ENCODE measurements at regions of chr14 and their contacts with region 1.

Region 1: DNA sequence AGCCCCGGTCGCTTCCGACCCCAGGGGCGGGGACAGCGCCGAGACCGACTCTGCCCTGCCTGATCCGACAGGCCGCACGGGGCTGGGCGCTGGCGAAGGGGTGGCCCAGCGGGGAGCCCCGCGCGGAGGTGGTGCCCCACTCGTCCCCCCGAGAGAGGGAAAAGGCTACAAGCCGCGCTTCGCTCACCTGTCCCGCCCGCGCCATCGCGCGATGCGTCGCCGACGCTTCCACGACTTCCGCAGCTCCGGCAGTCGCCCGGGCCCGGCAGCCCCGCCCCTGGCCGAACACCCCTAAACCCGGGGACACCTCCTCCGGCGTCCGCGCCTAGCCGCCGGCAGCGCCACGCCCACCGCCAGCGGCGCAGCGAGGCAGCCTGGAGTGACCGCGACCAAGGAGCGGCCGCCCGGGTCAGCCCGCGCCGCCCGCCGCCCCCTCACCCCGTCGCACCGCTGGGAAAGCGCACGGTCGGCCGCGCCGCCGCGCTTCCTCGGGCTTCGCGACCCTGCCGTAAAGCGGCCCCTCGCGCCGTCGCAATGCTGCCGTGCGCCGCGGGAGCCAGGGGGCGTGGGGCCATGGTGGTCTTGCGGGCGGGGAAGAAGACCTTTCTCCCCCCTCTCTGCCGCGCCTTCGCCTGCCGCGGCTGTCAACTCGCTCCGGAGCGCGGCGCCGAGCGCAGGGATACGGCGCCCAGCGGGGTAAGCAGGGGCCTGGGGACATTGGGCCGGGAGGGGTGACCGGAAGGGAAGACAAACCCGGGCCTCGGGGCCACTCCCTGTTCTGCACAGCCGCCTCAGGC is at the starts of genes BAG5 and COA8:
- DNase-seq: peak; percentile 84 to 89
- ATAC-seq: peak; percentile 88 to 89
- H3K4me3 ChIP-seq: peak within 1 kb of the TSS; percentile 99
- H3K27ac ChIP-seq: peak within 1 kb of the TSS; percentile 95 to 98
- H3K4me1 ChIP-seq: peaks cover 37% of the 10 kb centered on the region
- CTCF ChIP-seq: no peak
- EP300 ChIP-seq: no peak
- POLR2A ChIP-seq: peak; percentile 71
- RAD21 ChIP-seq: no peak
- polyA plus RNA-seq, gene BAG5: 20.4 and 20.8 TPM in 2 replicates
- polyA plus RNA-seq, gene COA8: 23.2 and 29.8 TPM in 2 replicates

Region 2: GRCh38 chr14:103520657-103521437 is 41.8 kb before region 1 on chr14:
- CTCF ChIA-PET with region 1: interaction called, 52 read pairs
- POLR2A ChIA-PET with region 1: no interaction called
- DNase-seq: peak; percentile 81
- ATAC-seq: peak; percentile 31 to 52
- H3K4me3 ChIP-seq: peak overlapping the region; percentile 79
- H3K27ac ChIP-seq: peak overlapping the region; percentile 71 to 88
- H3K4me1 ChIP-seq: peaks cover 56% of the 10 kb centered on the region
- CTCF ChIP-seq: peak; percentile 57; the same call in 2 of the 3 replicates
- EP300 ChIP-seq: no peak
- POLR2A ChIP-seq: peak; percentile 19; the same call in 1 of the 2 replicates
- RAD21 ChIP-seq: peak in 1 of 2 experiments; percentile 31; a peak in 2 of 5 replicates

Region 3: DNA sequence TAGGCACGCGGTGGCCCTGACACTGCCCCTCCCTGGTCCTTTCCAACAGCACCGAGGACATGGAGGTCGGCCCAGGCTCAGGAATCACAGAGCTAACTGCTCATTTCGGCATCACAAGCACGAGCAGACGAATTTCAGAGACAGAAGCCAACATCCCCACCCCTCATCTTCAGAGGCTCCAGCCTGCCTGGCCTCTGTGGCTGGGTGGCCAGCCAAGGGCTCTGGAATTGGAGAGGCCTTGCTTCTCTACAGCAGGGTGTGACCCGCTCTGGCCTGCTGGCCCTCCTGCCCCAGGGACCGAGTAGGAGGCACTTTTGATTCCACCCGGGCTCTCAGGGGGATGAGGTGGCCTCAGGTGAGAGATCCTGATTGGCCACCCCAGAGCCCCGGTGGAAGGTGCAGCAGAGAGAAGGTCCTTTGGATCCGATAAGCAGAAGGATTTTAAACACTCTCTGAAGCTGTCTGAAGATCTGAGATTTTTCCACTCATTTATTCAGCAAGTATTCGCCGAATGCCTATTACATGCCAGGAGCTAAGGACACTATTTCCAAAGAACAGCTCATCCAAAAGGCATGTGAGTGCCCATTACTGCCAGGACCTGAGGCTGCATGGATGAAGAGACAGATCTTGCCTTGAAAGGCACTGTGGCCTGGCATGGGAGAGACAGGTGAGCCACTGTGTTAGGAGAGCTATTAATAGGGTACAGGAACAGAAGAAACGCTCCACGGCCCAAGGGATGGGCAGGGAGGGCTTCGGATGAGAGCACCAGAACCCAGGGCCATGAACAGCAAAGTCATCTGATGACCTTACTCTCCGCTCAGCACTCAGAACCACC is 10.4 kb before region 1 on chr14:
- CTCF ChIA-PET with region 1: interaction called, 100 read pairs
- POLR2A ChIA-PET with region 1: interaction called, 10 read pairs
- DNase-seq: no peak
- ATAC-seq: peak; percentile 9 to 19; a peak in 3 of 6 replicates
- H3K4me3 ChIP-seq: no peak overlapping the region
- H3K27ac ChIP-seq: peak overlapping the region in 1 of 2 experiments; percentile 19; a peak in 3 of 6 replicates
- H3K4me1 ChIP-seq: peaks cover 14% of the 10 kb centered on the region; the same call in 2 of the 3 replicates
- CTCF ChIP-seq: no peak
- EP300 ChIP-seq: no peak
- POLR2A ChIP-seq: no peak
- RAD21 ChIP-seq: no peak

Region 4: GRCh38 chr14:103576371-103577024 is 13.9 kb after region 1 on chr14:
- CTCF ChIA-PET with region 1: interaction called, 19 read pairs
- POLR2A ChIA-PET with region 1: no interaction called
- DNase-seq: peak; percentile 81
- ATAC-seq: peak; percentile 96 to 98
- H3K4me3 ChIP-seq: no peak overlapping the region
- H3K27ac ChIP-seq: peak overlapping the region; percentile 65 to 86
- H3K4me1 ChIP-seq: peaks cover 23% of the 10 kb centered on the region
- CTCF ChIP-seq: no peak
- EP300 ChIP-seq: no peak
- POLR2A ChIP-seq: no peak
- RAD21 ChIP-seq: no peak

Measured in A549 (cell line).